Prostate gland (tissue), 2 donors: ENCODE measurements at regions of chr9 and their contacts with region 1.

Region 1: GRCh38 chr9:132944302-132945185 is at the start of gene TSC1:
- DNase-seq: peak; percentile 95
- H3K4me3 ChIP-seq: peak within 1 kb of the TSS; percentile 85 to 100
- H3K27ac ChIP-seq: peak within 1 kb of the TSS; percentile 92 to 96
- H3K4me1 ChIP-seq: peaks cover 6% of the 10 kb centered on the region
- H3K27me3 ChIP-seq: no peaks in the 10 kb centered on the region
- CTCF ChIP-seq: peak in 2 of 4 experiments; percentile 4 to 24
- POLR2A ChIP-seq: peak; percentile 54
- total RNA-seq, gene TSC1: 27.7 to 82.2 TPM

Region 2: DNA sequence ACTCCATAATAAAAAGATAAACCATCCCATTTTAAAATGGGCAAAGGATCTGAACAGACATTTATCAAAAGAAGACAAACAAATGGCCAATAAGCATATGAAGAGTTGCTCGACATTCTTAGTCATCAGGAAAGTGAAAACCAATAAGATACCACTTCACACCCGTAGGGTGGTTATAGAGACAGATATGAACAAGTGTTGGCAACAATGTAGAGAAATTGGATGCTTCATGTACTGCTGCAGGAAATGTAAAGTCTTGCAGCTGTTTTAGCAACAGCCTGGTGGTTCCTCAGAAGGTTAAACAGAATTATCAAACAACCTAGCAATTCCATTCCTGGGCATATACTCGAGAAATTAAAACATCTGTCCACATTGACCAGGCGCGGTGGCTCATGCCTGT is 231.8 kb before region 1 on chr9:
- intact Hi-C with region 1: no loop called
- DNase-seq: no peak
- H3K4me3 ChIP-seq: no peak overlapping the region
- H3K27ac ChIP-seq: no peak overlapping the region
- H3K4me1 ChIP-seq: no peaks in the 10 kb centered on the region
- H3K27me3 ChIP-seq: no peaks in the 10 kb centered on the region
- CTCF ChIP-seq: no peak
- POLR2A ChIP-seq: no peak

Region 3: GRCh38 chr9:132877824-132878694 is 66.5 kb before region 1 on chr9 and contains the start of gene AK8:
- intact Hi-C with region 1: loop called (anchors 10 kb)
- DNase-seq: peak; percentile 40
- H3K4me3 ChIP-seq: peak within 1 kb of the TSS; percentile 79 to 87
- H3K27ac ChIP-seq: peak within 1 kb of the TSS; percentile 78 to 80
- H3K4me1 ChIP-seq: no peaks in the 10 kb centered on the region
- H3K27me3 ChIP-seq: no peaks in the 10 kb centered on the region
- CTCF ChIP-seq: peak in 2 of 4 experiments; percentile 3 to 14
- POLR2A ChIP-seq: no peak
- total RNA-seq, gene AK8: 3.3 to 4.1 TPM

Region 4: GRCh38 chr9:133375724-133376654 is 431.4 kb after region 1 on chr9 and contains the starts of genes STKLD1 and SURF4:
- intact Hi-C with region 1: loop called (anchors 10 kb)
- DNase-seq: peak; percentile 95
- H3K4me3 ChIP-seq: peak within 1 kb of the TSS; percentile 99
- H3K27ac ChIP-seq: peak within 1 kb of the TSS; percentile 86 to 90
- H3K4me1 ChIP-seq: peaks cover 12% of the 10 kb centered on the region
- H3K27me3 ChIP-seq: no peaks in the 10 kb centered on the region
- CTCF ChIP-seq: peak in 2 of 4 experiments; percentile 42 to 56
- POLR2A ChIP-seq: peak; percentile 90
- total RNA-seq, gene STKLD1: 0.87 to 1.0 TPM
- total RNA-seq, gene SURF4: 185 to 204 TPM